ENCODE measurements at regions of chr3 and their contacts with region 1.

Region 1: GRCh38 chr3:195271116-195271858 is at the start of gene XXYLT1:
- DNase-seq: peak; percentile 85 to 96 (median 90)
- ATAC-seq: peak; percentile 94 to 98 (median 97)
- H3K4me3 ChIP-seq: peak within 1 kb of the TSS; percentile 85 to 95 (median 92)
- H3K27ac ChIP-seq: peak within 1 kb of the TSS; percentile 70 to 76 (median 72)
- H3K4me1 ChIP-seq: peaks cover 0 to 8% (median 3%) of the 10 kb centered on the region in 3 donors
- H3K27me3 ChIP-seq: no peaks in the 10 kb centered on the region
- CTCF ChIP-seq: peak; percentile 88 to 98 (median 95)
- total RNA-seq, gene XXYLT1: 1.8 to 5.0 (median 2.5) TPM

Region 2: DNA sequence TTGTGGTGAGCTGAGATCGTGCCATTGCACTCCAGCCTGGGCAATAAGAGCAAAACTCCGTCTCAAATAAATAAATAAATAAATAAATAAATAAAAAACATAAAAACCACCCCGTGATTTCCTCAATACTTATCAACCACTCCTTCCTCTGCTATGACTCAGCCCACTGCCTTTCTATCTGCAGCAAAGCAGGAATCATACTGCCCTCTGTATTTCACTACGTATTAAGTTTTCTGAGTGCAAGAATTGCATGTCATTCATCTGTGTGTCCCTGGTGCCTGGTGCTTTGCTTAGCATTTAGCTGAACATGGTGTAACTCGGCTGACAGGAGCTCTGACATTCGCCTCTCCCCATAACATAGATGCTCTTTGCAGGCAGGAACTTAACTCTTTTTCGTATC is 606.4 kb before region 1 on chr3:
- intact Hi-C with region 1: loop called in 1 of 3 experiments (anchors 5 kb)
- DNase-seq: no peak
- ATAC-seq: no peak
- H3K4me3 ChIP-seq: no peak overlapping the region
- H3K27ac ChIP-seq: no peak overlapping the region
- H3K4me1 ChIP-seq: peaks cover 0 to under 1% (median 0%) of the 10 kb centered on the region in 3 donors
- H3K27me3 ChIP-seq: no peaks in the 10 kb centered on the region
- CTCF ChIP-seq: no peak

Region 3: DNA sequence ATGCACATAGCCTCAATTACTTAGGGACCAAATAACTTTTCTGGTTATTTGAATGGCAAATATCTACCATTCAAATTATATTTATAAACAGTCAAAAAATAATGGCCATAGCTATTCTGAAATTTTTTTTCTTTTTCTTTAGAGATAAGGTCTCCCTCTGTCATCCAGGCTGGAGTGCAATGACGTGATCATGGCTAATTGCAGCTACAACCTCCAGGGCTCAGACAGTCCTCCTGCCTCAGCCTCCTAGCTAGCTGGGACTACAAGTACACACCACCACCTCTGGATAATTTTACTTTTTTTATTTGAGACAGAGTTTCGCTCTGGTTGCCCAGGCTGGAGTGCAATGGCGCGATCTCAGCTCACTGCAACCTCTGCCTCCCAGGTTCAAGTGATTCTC is 255.2 kb after region 1 on chr3:
- intact Hi-C with region 1: loop called in 1 of 3 experiments (anchors 5 kb)
- DNase-seq: no peak
- ATAC-seq: no peak
- H3K4me3 ChIP-seq: no peak overlapping the region
- H3K27ac ChIP-seq: no peak overlapping the region
- H3K4me1 ChIP-seq: no peaks in the 10 kb centered on the region
- H3K27me3 ChIP-seq: no peaks in the 10 kb centered on the region
- CTCF ChIP-seq: no peak

Measured in pancreas (tissue), 10 donors.